ENCODE measurements at regions of chr1 and their contacts with region 1.

Region 1: DNA sequence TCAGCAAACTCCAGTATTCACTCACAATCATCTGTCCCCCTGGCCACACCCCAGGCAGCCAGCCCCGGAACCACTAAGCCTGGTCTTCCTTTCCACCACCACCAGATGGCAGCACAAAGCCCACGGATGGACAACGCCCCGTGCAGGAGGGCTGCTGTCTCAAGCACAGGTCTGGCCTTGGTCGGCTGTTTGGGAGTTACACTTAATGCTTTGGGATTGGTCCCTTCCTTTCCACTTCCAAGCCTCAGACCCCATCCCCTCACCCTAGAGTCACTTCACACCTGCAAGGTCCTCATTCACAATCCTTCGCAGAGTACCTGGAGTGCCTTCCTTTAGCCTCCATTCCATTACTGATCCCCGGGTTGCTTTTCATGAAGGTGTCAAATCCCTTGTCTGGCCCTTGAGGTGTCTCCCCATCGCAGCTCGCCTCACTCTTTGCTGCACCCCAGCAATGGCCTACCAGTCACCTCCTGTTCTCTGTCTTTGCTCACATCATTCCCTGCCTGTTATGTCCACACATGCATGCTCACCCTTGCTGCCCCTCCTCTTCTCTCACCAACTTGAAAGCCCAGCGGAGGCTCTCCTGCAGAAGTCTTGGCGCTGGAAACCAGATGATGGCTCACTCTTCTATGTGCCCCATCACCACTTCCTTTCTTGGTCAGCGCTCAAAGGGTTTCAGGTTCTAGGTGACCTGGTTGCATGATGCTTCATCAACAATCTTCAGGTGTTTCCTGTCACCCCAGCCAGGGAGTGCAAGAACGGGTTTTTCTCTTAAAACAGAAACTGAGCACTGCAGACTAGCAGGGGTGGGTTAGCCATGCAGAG is 24.9 kb upstream of the KCNA2 start:
- DNase-seq: peak; percentile 66
- H3K4me3 ChIP-seq: no peak overlapping the region
- H3K27ac ChIP-seq: no peak overlapping the region
- H3K4me1 ChIP-seq: no peaks in the 10 kb centered on the region
- H3K27me3 ChIP-seq: no peaks in the 10 kb centered on the region
- CTCF ChIP-seq: peak; percentile 75 to 81 (median 80)
- POLR2A ChIP-seq: no peak

Region 2: GRCh38 chr1:109669246-109669938 is 961.7 kb before region 1 on chr1:
- intact Hi-C with region 1: no loop called
- DNase-seq: no peak
- H3K4me3 ChIP-seq: no peak overlapping the region
- H3K27ac ChIP-seq: no peak overlapping the region
- H3K4me1 ChIP-seq: no peaks in the 10 kb centered on the region
- H3K27me3 ChIP-seq: no peaks in the 10 kb centered on the region
- CTCF ChIP-seq: no peak
- POLR2A ChIP-seq: no peak

Region 3: DNA sequence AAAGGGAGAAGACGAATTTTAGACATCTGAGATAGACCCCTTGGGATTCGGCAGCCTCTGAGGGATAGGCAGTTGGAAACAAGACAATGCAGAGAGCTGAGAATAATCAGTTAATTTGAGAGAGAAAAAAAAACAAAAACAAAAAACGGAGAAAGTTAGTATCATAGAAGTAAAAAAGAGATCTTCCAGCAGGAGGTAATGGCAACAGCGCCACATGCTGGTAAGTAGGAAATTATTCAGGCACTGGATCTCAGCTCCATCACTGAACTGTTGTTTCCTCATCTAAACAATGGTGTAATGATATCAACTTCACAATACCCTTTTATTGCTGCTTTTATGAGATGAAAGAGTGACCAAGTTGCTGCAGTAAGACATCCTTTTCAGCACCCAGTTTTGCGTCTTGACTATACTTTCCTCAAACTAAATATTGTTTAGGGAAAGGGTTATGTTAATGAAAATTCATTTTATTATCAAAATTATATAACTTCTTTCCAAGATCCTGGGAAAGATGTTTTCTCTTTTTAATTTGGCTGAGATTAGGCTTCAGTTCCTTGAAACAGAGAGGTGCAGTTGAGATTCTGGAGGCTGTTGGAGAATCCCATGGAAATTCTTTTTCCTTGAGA is 135.1 kb after region 1 on chr1:
- intact Hi-C with region 1: loop called (anchors 2 kb)
- DNase-seq: peak; percentile 39
- H3K4me3 ChIP-seq: no peak overlapping the region
- H3K27ac ChIP-seq: no peak overlapping the region
- H3K4me1 ChIP-seq: no peaks in the 10 kb centered on the region
- H3K27me3 ChIP-seq: peaks cover under 1% of the 10 kb centered on the region
- CTCF ChIP-seq: peak; percentile 49 to 69 (median 66)
- POLR2A ChIP-seq: no peak